ENCODE measurements at regions of chr9 and their contacts with region 1.

Region 1: GRCh38 chr9:113737517-113738271 is 138.4 kb upstream of the ZNF618 start:
- DNase-seq: peak in 1 of 2 donors; percentile 42
- ATAC-seq: peak in 1 of 8 donors; percentile 57
- H3K4me3 ChIP-seq: no peak overlapping the region
- H3K27ac ChIP-seq: no peak overlapping the region
- H3K4me1 ChIP-seq: no peaks in the 10 kb centered on the region
- H3K27me3 ChIP-seq: peaks cover 0 to 23% (median 15%) of the 10 kb centered on the region in 7 donors
- CTCF ChIP-seq: peak; percentile 26 to 83 (median 69)

Region 2: DNA sequence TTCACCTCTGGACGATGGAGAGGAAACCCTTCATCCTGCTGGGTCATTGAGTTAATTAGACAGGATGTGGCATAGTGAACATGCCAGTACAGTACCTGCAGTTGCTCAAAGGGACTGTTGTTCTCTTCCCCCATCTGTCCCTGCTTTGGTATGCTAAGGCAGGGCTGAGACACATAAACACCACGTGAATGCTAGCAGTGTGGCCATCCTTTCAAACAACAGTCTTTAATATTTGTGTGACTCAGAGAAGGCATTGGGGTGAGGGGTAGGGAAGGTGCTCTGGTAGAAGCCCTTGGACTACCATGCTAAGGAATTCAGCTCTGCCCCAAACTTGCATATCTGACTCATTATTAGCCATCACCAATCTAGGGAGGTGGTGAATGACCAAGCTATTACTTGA is 41.8 kb before region 1 on chr9:
- intact Hi-C with region 1: no loop called
- DNase-seq: no peak
- ATAC-seq: no peak
- H3K4me3 ChIP-seq: no peak overlapping the region
- H3K27ac ChIP-seq: no peak overlapping the region
- H3K4me1 ChIP-seq: no peaks in the 10 kb centered on the region
- H3K27me3 ChIP-seq: peaks cover 0 to 23% (median 11%) of the 10 kb centered on the region in 7 donors
- CTCF ChIP-seq: no peak

Region 3: GRCh38 chr9:113785334-113785733 is 47.6 kb after region 1 on chr9:
- intact Hi-C with region 1: loop called in 1 of 10 experiments (anchors 5 kb)
- DNase-seq: peak; percentile 19 to 55
- ATAC-seq: peak in 4 of 8 donors; percentile 24 to 74 (median 58)
- H3K4me3 ChIP-seq: no peak overlapping the region
- H3K27ac ChIP-seq: no peak overlapping the region
- H3K4me1 ChIP-seq: no peaks in the 10 kb centered on the region
- H3K27me3 ChIP-seq: peaks cover 0 to 26% (median 0%) of the 10 kb centered on the region in 7 donors
- CTCF ChIP-seq: no peak

Region 4: DNA sequence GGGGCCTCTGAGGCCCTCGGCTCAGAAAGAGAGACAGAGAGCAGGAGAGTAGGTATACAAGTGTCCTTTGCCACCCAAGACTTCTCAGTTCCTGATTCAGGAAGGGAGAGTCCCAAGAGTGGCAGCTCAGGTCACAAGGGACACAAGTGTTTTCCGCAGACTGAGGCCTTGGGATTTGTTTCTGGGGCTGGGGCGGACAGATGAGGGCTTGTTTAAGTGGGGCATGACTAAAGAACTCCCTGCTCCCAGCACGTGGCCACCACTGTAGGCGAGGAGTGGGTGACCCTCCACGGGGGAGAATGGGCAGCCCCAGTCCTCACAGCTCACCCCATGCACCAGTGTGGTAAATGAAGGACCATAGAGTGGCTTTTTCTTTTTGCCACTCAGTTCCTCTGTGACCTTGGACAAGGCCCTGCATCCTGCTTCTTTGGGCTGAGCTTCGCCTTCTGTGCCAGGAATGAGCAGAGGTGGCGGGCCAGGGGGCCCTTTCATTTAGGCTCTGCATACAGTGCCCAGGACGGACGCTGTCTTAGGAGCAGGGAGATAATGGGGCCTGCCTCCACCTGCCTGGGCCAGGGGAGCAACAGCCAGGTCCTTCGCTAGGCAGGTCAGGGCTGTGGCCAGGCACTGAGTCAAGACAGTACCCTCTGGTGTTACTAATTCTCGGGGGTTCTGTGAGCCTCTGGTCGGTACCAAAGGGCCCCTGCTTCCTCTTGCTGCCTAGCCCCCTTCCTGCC is 289.6 kb after region 1 on chr9:
- intact Hi-C with region 1: loop called in 7 of 10 experiments (anchors 5 to 10 kb)
- DNase-seq: no peak
- ATAC-seq: no peak
- H3K4me3 ChIP-seq: no peak overlapping the region
- H3K27ac ChIP-seq: no peak overlapping the region
- H3K4me1 ChIP-seq: peaks cover 0 to 3% (median 0%) of the 10 kb centered on the region in 9 donors
- H3K27me3 ChIP-seq: no peaks in the 10 kb centered on the region
- CTCF ChIP-seq: no peak

Region 5: GRCh38 chr9:114033397-114034103 is 295.9 kb after region 1 on chr9:
- intact Hi-C with region 1: loop called in 7 of 10 experiments (anchors 5 to 10 kb)
- DNase-seq: peak in 1 of 2 donors; percentile 48
- ATAC-seq: peak; percentile 54 to 84 (median 73)
- H3K4me3 ChIP-seq: no peak overlapping the region
- H3K27ac ChIP-seq: no peak overlapping the region
- H3K4me1 ChIP-seq: peaks cover 0 to 7% (median 0%) of the 10 kb centered on the region in 9 donors
- H3K27me3 ChIP-seq: no peaks in the 10 kb centered on the region
- CTCF ChIP-seq: peak; percentile 23 to 74 (median 65)

Region 6: GRCh38 chr9:114098016-114098935 is 360.6 kb after region 1 on chr9:
- intact Hi-C with region 1: no loop called
- DNase-seq: peak in 1 of 2 donors; percentile 39
- ATAC-seq: peak; percentile 39 to 79 (median 57)
- H3K4me3 ChIP-seq: peak overlapping the region in 9 of 10 donors; percentile 35 to 55 (median 46)
- H3K27ac ChIP-seq: no peak overlapping the region
- H3K4me1 ChIP-seq: peaks cover 0 to 16% (median 7%) of the 10 kb centered on the region in 9 donors
- H3K27me3 ChIP-seq: peaks cover 4 to 44% (median 40%) of the 10 kb centered on the region in 7 donors
- CTCF ChIP-seq: no peak

Measured in heart right ventricle (tissue), 16 donors.